MCF 10A (cell line): ENCODE measurements at regions of chr5 and their contacts with region 1.

Region 1: GRCh38 chr5:169302491-169303118 is 1.7 kb upstream of the SLIT3 start:
- DNase-seq: peak; percentile 86
- H3K4me3 Mint-ChIP-seq: peak overlapping the region; percentile 74
- H3K27ac Mint-ChIP-seq: no peak overlapping the region
- H3K4me1 Mint-ChIP-seq: peaks cover 19% of the 10 kb centered on the region
- H3K27me3 Mint-ChIP-seq: no peaks in the 10 kb centered on the region
- CTCF ChIP-seq: peak; percentile 95

Region 2: GRCh38 chr5:168472329-168472728 is 830.3 kb before region 1 on chr5:
- CTCF ChIA-PET with region 1: no interaction called
- POLR2A ChIA-PET with region 1: no interaction called
- intact Hi-C with region 1: loop called (anchors 5 kb)
- DNase-seq: peak; percentile 78
- H3K4me3 Mint-ChIP-seq: no peak overlapping the region
- H3K27ac Mint-ChIP-seq: peak overlapping the region; percentile 6
- H3K4me1 Mint-ChIP-seq: peaks cover 15% of the 10 kb centered on the region
- H3K27me3 Mint-ChIP-seq: no peaks in the 10 kb centered on the region
- CTCF ChIP-seq: peak; percentile 60

Region 3: DNA sequence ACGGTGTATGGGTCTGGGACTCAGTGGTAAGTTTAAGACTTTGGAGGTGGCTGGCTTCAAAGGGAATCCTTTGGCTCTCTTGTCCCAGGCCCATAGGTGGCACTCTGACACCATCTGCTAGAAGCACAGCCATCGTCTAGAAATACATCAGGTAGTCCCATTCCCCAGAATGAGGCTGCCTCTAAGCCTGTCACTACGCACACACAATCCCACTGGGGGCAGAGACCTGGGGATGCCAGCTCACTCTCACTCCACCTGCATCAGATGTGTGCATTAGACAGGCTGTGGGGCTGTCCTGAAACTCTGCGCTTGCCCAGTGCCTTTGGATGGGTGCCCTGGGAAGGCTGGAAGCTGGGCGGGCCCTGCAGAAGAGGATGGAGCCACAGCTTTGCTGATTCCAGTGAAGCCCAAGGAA is 595.9 kb before region 1 on chr5:
- CTCF ChIA-PET with region 1: no interaction called
- POLR2A ChIA-PET with region 1: no interaction called
- intact Hi-C with region 1: loop called (anchors 1 kb)
- DNase-seq: peak; percentile 60
- H3K4me3 Mint-ChIP-seq: no peak overlapping the region
- H3K27ac Mint-ChIP-seq: no peak overlapping the region
- H3K4me1 Mint-ChIP-seq: no peaks in the 10 kb centered on the region
- H3K27me3 Mint-ChIP-seq: no peaks in the 10 kb centered on the region
- CTCF ChIP-seq: peak; percentile 53

Region 4: GRCh38 chr5:169279125-169279524 is 23.5 kb before region 1 on chr5:
- CTCF ChIA-PET with region 1: interaction called, 11 read pairs
- POLR2A ChIA-PET with region 1: no interaction called
- intact Hi-C with region 1: no loop called
- DNase-seq: no peak
- H3K4me3 Mint-ChIP-seq: no peak overlapping the region
- H3K27ac Mint-ChIP-seq: no peak overlapping the region
- H3K4me1 Mint-ChIP-seq: no peaks in the 10 kb centered on the region
- H3K27me3 Mint-ChIP-seq: no peaks in the 10 kb centered on the region
- CTCF ChIP-seq: no peak

Region 5: GRCh38 chr5:169286572-169287300 is 15.9 kb before region 1 on chr5:
- CTCF ChIA-PET with region 1: interaction called, 34 read pairs
- POLR2A ChIA-PET with region 1: no interaction called
- intact Hi-C with region 1: no loop called
- DNase-seq: no peak
- H3K4me3 Mint-ChIP-seq: no peak overlapping the region
- H3K27ac Mint-ChIP-seq: no peak overlapping the region
- H3K4me1 Mint-ChIP-seq: peaks cover 7% of the 10 kb centered on the region
- H3K27me3 Mint-ChIP-seq: no peaks in the 10 kb centered on the region
- CTCF ChIP-seq: no peak

Region 6: DNA sequence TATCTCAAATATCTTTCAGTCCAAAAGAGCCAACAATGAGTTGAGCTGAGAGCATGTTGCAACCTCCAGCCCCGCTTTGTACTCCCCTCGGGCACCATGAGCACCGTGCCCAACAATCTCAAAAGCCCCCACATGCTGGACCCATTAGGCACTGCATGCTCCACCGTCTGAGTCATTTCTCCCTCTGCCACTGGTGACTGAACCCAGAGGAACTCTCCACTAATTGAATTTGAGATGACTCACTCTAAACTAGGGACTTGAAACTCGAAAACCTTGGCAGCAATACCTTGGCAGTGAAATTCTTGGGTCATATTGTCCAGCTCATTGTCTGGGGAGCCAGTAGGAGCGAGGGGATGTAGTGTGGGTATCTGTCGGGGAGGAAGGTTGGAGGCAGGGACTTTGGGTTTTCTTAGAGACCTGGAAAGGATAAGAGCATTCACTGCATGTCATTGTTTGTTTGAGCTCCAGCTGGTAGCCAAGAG is 48.2 kb after region 1 on chr5:
- CTCF ChIA-PET with region 1: interaction called, 5 read pairs
- POLR2A ChIA-PET with region 1: interaction called, 3 read pairs
- intact Hi-C with region 1: loop called (anchors 2 kb)
- DNase-seq: peak; percentile 100
- H3K4me3 Mint-ChIP-seq: peak overlapping the region; percentile 49
- H3K27ac Mint-ChIP-seq: peak overlapping the region; percentile 75
- H3K4me1 Mint-ChIP-seq: peaks cover 53% of the 10 kb centered on the region
- H3K27me3 Mint-ChIP-seq: no peaks in the 10 kb centered on the region
- CTCF ChIP-seq: no peak

Region 7: GRCh38 chr5:169548315-169548714 is 245.7 kb after region 1 on chr5:
- CTCF ChIA-PET with region 1: interaction called, 4 read pairs
- POLR2A ChIA-PET with region 1: no interaction called
- intact Hi-C with region 1: loop called (anchors 2 kb)
- DNase-seq: peak; percentile 55
- H3K4me3 Mint-ChIP-seq: no peak overlapping the region
- H3K27ac Mint-ChIP-seq: no peak overlapping the region
- H3K4me1 Mint-ChIP-seq: no peaks in the 10 kb centered on the region
- H3K27me3 Mint-ChIP-seq: peaks cover 30% of the 10 kb centered on the region
- CTCF ChIP-seq: peak; percentile 78